Heart right ventricle (tissue), 16 donors: ENCODE measurements at regions of chr5 and their contacts with region 1.

Region 1: DNA sequence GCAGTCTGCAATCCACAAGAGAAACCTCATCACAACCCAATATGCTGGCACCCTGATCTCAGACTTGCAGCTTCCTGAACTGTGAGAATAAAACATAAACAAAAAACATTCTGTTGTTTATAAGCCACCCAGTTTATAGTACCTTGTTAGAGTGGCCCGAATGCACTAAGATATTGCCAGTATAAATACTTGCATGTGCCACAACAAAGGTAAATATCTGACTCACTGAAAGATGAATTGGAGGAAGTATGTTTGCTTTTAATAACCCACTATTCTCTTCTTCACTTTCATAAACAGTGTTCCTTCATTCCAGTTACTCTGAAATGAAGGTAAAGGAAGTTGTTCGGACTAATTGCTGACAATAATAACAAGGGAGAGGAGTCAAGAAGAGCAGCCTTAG is 1163.4 kb upstream of the CDH6 start:
- DNase-seq: no peak
- ATAC-seq: no peak
- H3K4me3 ChIP-seq: no peak overlapping the region
- H3K27ac ChIP-seq: no peak overlapping the region
- H3K4me1 ChIP-seq: no peaks in the 10 kb centered on the region
- H3K27me3 ChIP-seq: no peaks in the 10 kb centered on the region
- CTCF ChIP-seq: no peak

Region 2: GRCh38 chr5:30069441-30070263 is 39.5 kb after region 1 on chr5:
- intact Hi-C with region 1: no loop called
- DNase-seq: no peak
- ATAC-seq: no peak
- H3K4me3 ChIP-seq: no peak overlapping the region
- H3K27ac ChIP-seq: no peak overlapping the region
- H3K4me1 ChIP-seq: no peaks in the 10 kb centered on the region
- H3K27me3 ChIP-seq: no peaks in the 10 kb centered on the region
- CTCF ChIP-seq: no peak

Region 3: GRCh38 chr5:30561771-30562170 is 531.7 kb after region 1 on chr5:
- intact Hi-C with region 1: loop called in 1 of 10 experiments (anchors 10 kb)
- DNase-seq: no peak
- ATAC-seq: no peak
- H3K4me3 ChIP-seq: no peak overlapping the region
- H3K27ac ChIP-seq: no peak overlapping the region
- H3K4me1 ChIP-seq: no peaks in the 10 kb centered on the region
- H3K27me3 ChIP-seq: no peaks in the 10 kb centered on the region
- CTCF ChIP-seq: no peak